B cell (primary cell): ENCODE measurements at regions of chr10 and their contacts with region 1.

Region 1: GRCh38 chr10:63720072-63720537 is 198.9 kb downstream of the REEP3 start:
- DNase-seq: peak; percentile 76
- ATAC-seq: peak; percentile 94
- H3K4me3 ChIP-seq: no peak overlapping the region
- H3K4me3 Mint-ChIP-seq: no peak overlapping the region
- H3K27ac ChIP-seq: no peak overlapping the region
- H3K27ac Mint-ChIP-seq: no peak overlapping the region
- H3K4me1 ChIP-seq: no peaks in the 10 kb centered on the region
- H3K4me1 Mint-ChIP-seq: peaks cover 7% of the 10 kb centered on the region
- H3K27me3 ChIP-seq: peaks cover 0 to 13% (median 2%) of the 10 kb centered on the region in 4 experiments
- H3K27me3 Mint-ChIP-seq: peaks cover 13% of the 10 kb centered on the region
- CTCF ChIP-seq: peak; percentile 100

Region 2: GRCh38 chr10:63157845-63158624 is 562.1 kb before region 1 on chr10:
- CTCF ChIA-PET with region 1: interaction called, 453 read pairs
- POLR2A ChIA-PET with region 1: no interaction called
- intact Hi-C with region 1: no loop called
- DNase-seq: peak; percentile 85
- ATAC-seq: peak; percentile 68
- H3K4me3 ChIP-seq: no peak overlapping the region
- H3K4me3 Mint-ChIP-seq: no peak overlapping the region
- H3K27ac ChIP-seq: no peak overlapping the region
- H3K27ac Mint-ChIP-seq: no peak overlapping the region
- H3K4me1 ChIP-seq: no peaks in the 10 kb centered on the region
- H3K4me1 Mint-ChIP-seq: peaks cover 9% of the 10 kb centered on the region
- H3K27me3 ChIP-seq: no peaks in the 10 kb centered on the region
- H3K27me3 Mint-ChIP-seq: no peaks in the 10 kb centered on the region
- CTCF ChIP-seq: peak; percentile 90

Region 3: GRCh38 chr10:63197344-63198106 is 522.6 kb before region 1 on chr10:
- CTCF ChIA-PET with region 1: interaction called, 15 read pairs
- POLR2A ChIA-PET with region 1: no interaction called
- intact Hi-C with region 1: no loop called
- DNase-seq: no peak
- ATAC-seq: no peak
- H3K4me3 ChIP-seq: no peak overlapping the region
- H3K4me3 Mint-ChIP-seq: no peak overlapping the region
- H3K27ac ChIP-seq: no peak overlapping the region
- H3K27ac Mint-ChIP-seq: peak overlapping the region; percentile 32
- H3K4me1 ChIP-seq: peaks cover 0 to 5% of the 10 kb centered on the region in 2 donors
- H3K4me1 Mint-ChIP-seq: peaks cover 8% of the 10 kb centered on the region
- H3K27me3 ChIP-seq: no peaks in the 10 kb centered on the region
- H3K27me3 Mint-ChIP-seq: no peaks in the 10 kb centered on the region
- CTCF ChIP-seq: no peak

Region 4: GRCh38 chr10:63256009-63256773 is 463.9 kb before region 1 on chr10:
- CTCF ChIA-PET with region 1: interaction called, 13 read pairs
- POLR2A ChIA-PET with region 1: no interaction called
- intact Hi-C with region 1: no loop called
- DNase-seq: peak; percentile 47
- ATAC-seq: peak; percentile 42
- H3K4me3 ChIP-seq: peak overlapping the region in 1 of 5 experiments; percentile 32
- H3K4me3 Mint-ChIP-seq: peak overlapping the region; percentile 83
- H3K27ac ChIP-seq: peak overlapping the region; percentile 34 to 73
- H3K27ac Mint-ChIP-seq: peak overlapping the region; percentile 88
- H3K4me1 ChIP-seq: peaks cover 81 to 92% of the 10 kb centered on the region in 2 donors
- H3K4me1 Mint-ChIP-seq: peaks cover 85% of the 10 kb centered on the region
- H3K27me3 ChIP-seq: no peaks in the 10 kb centered on the region
- H3K27me3 Mint-ChIP-seq: no peaks in the 10 kb centered on the region
- CTCF ChIP-seq: no peak

Region 5: GRCh38 chr10:63700209-63700613 is 19.9 kb before region 1 on chr10:
- CTCF ChIA-PET with region 1: interaction called, 23 read pairs
- POLR2A ChIA-PET with region 1: no interaction called
- intact Hi-C with region 1: no loop called
- DNase-seq: no peak
- ATAC-seq: no peak
- H3K4me3 ChIP-seq: no peak overlapping the region
- H3K4me3 Mint-ChIP-seq: no peak overlapping the region
- H3K27ac ChIP-seq: peak overlapping the region in 1 of 2 donors; percentile 13
- H3K27ac Mint-ChIP-seq: peak overlapping the region; percentile 13
- H3K4me1 ChIP-seq: peaks cover 30 to 31% of the 10 kb centered on the region in 2 donors
- H3K4me1 Mint-ChIP-seq: peaks cover 41% of the 10 kb centered on the region
- H3K27me3 ChIP-seq: no peaks in the 10 kb centered on the region
- H3K27me3 Mint-ChIP-seq: no peaks in the 10 kb centered on the region
- CTCF ChIP-seq: no peak